BJ (cell line): ENCODE measurements at regions of chr1 and their contacts with region 1.

Region 1: DNA sequence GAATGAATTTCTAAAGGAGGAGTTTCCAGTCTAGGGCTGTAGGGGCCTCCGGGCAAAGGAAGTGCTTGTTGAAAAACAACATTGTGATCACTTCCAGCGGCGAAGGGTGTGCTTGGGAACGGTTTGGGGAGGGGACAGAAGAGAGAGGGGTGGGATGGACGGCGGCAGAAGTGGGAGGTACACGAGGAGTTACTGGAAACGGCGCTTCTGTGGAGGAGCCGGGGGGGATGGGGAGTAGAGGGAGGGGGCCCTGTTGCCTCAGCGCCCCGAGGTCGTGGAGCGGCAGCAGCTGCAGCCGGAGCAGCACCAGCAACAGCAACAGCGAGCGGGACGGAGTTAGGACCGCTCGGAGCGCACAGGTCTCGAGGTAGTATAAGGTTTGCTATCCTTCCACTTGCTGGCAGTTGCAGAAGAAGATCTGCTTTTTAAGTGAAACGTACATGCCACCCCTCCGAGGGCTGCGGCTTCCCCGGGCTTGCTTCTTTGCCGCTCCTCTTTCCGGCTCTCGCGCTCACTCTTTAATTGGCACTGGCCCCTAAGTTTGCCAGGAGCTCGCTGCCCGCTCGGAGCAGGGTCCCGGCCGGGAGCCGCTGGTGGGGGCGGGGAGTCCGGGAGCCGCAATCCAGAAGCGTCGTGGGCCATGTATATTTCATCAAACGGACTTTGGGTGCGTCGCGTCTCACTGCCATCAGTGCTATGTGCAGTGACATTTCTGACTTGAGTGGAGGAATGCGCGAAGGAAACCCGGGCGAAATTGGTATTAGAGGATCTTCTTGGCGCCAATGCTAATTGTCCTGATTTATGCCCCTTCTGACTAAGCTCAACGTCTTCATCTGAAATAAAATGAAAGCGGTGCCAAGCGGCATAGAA is 771 bp upstream of the NTNG1 start:
- DNase-seq: no peak
- H3K4me3 ChIP-seq: peak overlapping the region; percentile 51
- H3K27me3 ChIP-seq: no peaks in the 10 kb centered on the region
- CTCF ChIP-seq: no peak

Region 2: GRCh38 chr1:106049595-106049994 is 1090.5 kb before region 1 on chr1:
- CTCF ChIA-PET with region 1: no interaction called
- POLR2A ChIA-PET with region 1: interaction called, 29 read pairs
- DNase-seq: no peak
- H3K4me3 ChIP-seq: no peak overlapping the region
- H3K27me3 ChIP-seq: no peaks in the 10 kb centered on the region
- CTCF ChIP-seq: no peak